Activated T-helper 2 cell treated with anti-CD3 and anti-CD28 coated beads, Interferon-gamma antibody, Interleukin-2, Interleukin-4, amounts not matched to agents 10 μg/mL and 5 μg/mL and 100 μg/mL, durations not matched to agents 14 hours and 24 hours and 36 hours (primary cell): ENCODE measurements at regions of chr16 and their contacts with region 1.

Region 1: GRCh38 chr16:56729735-56730662 is at the start of gene NUP93:
- DNase-seq: peak; percentile 88
- H3K4me3 Mint-ChIP-seq: no peak within 1 kb of the TSS
- H3K27ac Mint-ChIP-seq: peak within 1 kb of the TSS; percentile 83
- H3K4me1 Mint-ChIP-seq: peaks cover 17% of the 10 kb centered on the region
- H3K27me3 Mint-ChIP-seq: no peaks in the 10 kb centered on the region
- total RNA-seq, gene NUP93: 145 and 149 TPM in 2 replicates

Region 2: GRCh38 chr16:56771558-56772279 is 41.7 kb after region 1 on chr16:
- intact Hi-C with region 1: loop called (anchors 5 kb)
- DNase-seq: no peak
- H3K4me3 Mint-ChIP-seq: no peak overlapping the region
- H3K27ac Mint-ChIP-seq: peak overlapping the region; percentile 67
- H3K4me1 Mint-ChIP-seq: peaks cover 24% of the 10 kb centered on the region
- H3K27me3 Mint-ChIP-seq: no peaks in the 10 kb centered on the region